Right lobe of liver (tissue), 6 donors: ENCODE measurements at regions of chr4 and their contacts with region 1.

Region 1: DNA sequence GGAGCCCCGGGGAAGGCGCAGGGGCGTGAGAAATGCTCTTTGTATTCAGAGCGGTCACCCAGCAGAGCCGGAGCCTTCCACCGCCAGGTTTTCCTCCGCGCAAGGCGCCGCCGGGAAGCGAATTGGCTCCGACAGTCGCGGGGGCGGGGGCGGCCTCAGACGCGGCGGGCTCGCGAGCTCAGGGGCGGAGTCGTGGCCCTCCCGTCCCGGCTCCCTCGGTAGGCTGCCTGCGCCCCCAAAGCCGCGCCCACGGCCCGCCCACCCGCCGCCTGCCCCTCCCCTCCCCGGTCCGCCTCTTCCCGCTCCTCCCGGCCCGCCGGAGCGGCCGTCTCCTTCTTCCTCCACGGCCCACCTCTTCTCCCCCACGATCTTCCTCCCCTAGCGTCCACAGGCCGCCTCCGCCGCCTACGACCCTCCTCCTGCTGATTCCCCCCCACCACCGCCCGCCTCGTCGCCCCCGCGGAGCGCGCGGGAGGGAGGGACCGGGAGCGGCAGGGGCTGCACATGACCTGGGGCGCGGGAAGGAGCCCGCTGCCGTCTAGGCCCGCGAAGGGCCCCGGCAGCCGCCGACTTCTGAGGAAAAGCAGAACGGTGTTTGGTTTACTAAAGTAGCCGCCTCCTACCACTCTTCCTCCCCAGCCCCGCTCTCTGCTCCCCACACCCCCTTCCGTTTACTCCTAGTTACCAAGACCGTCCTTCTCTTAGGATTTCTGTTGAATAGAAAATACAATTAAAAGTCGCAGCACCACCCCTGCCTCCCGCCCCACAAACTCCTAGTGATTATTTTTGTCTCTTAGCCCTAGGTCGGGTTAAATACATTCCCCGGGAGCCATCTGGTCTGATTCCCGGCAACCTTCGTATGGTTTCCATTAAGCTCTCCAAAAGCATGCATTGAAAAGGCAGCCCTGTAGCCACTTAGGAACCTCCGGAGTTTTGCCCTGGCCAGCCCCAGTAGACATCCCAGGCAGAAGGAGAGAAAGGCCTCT is 53.2 kb downstream of the C4orf51 start:
- DNase-seq: peak; percentile 92 to 94 (median 93)
- ATAC-seq: peak; percentile 82 to 94 (median 86)
- H3K4me3 ChIP-seq: peak overlapping the region; percentile 24 to 56 (median 45)
- H3K27ac ChIP-seq: peak overlapping the region; percentile 68 to 90 (median 76)
- H3K4me1 ChIP-seq: peaks cover 0 to 40% (median 21%) of the 10 kb centered on the region in 4 donors
- H3K27me3 ChIP-seq: no peaks in the 10 kb centered on the region
- CTCF ChIP-seq: peak in 1 of 4 donors; percentile 6
- POLR2A ChIP-seq: peak; percentile 70

Region 2: GRCh38 chr4:145804116-145804515 is 70.9 kb after region 1 on chr4:
- intact Hi-C with region 1: loop called in 1 of 2 experiments (anchors 5 kb)
- DNase-seq: peak in 1 of 3 donors; percentile 59
- ATAC-seq: peak; percentile 88 to 95 (median 90)
- H3K4me3 ChIP-seq: no peak overlapping the region
- H3K27ac ChIP-seq: peak overlapping the region in 1 of 3 donors; percentile 4
- H3K4me1 ChIP-seq: peaks cover 0 to 30% (median 3%) of the 10 kb centered on the region in 4 donors
- H3K27me3 ChIP-seq: no peaks in the 10 kb centered on the region
- CTCF ChIP-seq: no peak
- POLR2A ChIP-seq: no peak